Esophagus squamous epithelium (tissue), 5 donors: ENCODE measurements at regions of chr6 and their contacts with region 1.

Region 1: GRCh38 chr6:31193200-31193599 is 22.7 kb upstream of the POU5F1 start:
- DNase-seq: no peak
- H3K4me3 ChIP-seq: no peak overlapping the region
- H3K27ac ChIP-seq: no peak overlapping the region
- H3K4me1 ChIP-seq: peaks cover 0 to 13% (median 6%) of the 10 kb centered on the region in 3 donors
- H3K27me3 ChIP-seq: no peaks in the 10 kb centered on the region
- CTCF ChIP-seq: peak in 1 of 6 experiments; percentile 12
- POLR2A ChIP-seq: no peak

Region 2: DNA sequence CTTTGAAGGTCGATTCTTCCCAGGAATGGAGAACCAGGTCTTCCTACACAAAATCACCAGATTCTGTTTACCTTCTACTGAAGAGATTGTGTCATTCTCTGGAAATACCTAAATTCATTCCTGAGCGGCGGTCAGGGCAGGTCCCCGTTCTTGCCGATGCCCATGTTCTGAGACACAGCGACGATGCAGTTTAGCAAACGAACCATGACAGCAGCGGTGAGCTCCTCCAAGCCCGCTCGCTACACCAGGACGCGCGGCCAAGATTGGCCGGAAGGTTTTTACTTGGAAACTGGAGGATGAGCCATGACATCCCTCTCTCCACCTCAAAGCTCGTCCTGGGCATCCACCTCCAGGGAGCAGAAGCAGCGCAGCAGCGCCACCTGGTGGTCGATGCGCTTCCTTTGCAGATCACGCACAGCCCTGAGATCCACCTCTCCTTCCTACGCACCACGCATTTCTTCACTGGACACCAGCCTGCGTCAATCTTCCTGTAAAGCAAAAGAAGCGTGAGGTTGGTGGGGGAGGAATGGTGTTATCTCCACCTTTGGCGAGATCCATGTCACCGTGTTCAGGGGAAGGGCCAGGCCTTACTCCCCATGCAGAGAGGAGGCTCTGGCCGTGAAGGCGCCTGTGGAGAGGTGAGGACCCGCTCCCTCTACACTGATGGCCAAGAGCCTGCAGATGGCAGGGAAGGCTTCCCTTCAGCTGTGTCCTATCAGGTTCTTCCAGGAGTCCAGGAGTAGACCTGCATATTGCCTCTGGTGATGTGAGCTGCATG is 173.7 kb after region 1 on chr6:
- intact Hi-C with region 1: loop called (anchors 5 kb)
- DNase-seq: peak; percentile 44
- H3K4me3 ChIP-seq: peak overlapping the region in 3 of 4 donors; percentile 28 to 58 (median 34)
- H3K27ac ChIP-seq: no peak overlapping the region
- H3K4me1 ChIP-seq: peaks cover 0 to 9% (median 0%) of the 10 kb centered on the region in 3 donors
- H3K27me3 ChIP-seq: peaks cover 0 to 83% (median 0%) of the 10 kb centered on the region in 4 donors
- CTCF ChIP-seq: peak; percentile 86 to 98 (median 95)
- POLR2A ChIP-seq: no peak

Region 3: GRCh38 chr6:31619805-31620585 is 426.8 kb after region 1 on chr6:
- intact Hi-C with region 1: no loop called
- DNase-seq: peak; percentile 94
- H3K4me3 ChIP-seq: peak overlapping the region; percentile 80 to 98 (median 86)
- H3K27ac ChIP-seq: peak overlapping the region; percentile 97 to 99 (median 98)
- H3K4me1 ChIP-seq: peaks cover 11 to 35% (median 14%) of the 10 kb centered on the region in 3 donors
- H3K27me3 ChIP-seq: no peaks in the 10 kb centered on the region
- CTCF ChIP-seq: peak in 3 of 6 experiments; percentile 13 to 26 (median 25)
- POLR2A ChIP-seq: peak in 3 of 4 donors; percentile 85 to 91 (median 88)